Activated T-helper 1 cell treated with anti-CD3 and anti-CD28 coated beads, Interleukin-12 subunit alpha, Interleukin-12 subunit beta, Interleukin-2, Interleukin-4 antibody, amounts not matched to agents 30 ng/mL and 10 ng/mL and 1 ng/mL, durations not matched to agents 14 hours and 24 hours and 36 hours (primary cell): ENCODE measurements at regions of chr9 and their contacts with region 1.

Region 1: DNA sequence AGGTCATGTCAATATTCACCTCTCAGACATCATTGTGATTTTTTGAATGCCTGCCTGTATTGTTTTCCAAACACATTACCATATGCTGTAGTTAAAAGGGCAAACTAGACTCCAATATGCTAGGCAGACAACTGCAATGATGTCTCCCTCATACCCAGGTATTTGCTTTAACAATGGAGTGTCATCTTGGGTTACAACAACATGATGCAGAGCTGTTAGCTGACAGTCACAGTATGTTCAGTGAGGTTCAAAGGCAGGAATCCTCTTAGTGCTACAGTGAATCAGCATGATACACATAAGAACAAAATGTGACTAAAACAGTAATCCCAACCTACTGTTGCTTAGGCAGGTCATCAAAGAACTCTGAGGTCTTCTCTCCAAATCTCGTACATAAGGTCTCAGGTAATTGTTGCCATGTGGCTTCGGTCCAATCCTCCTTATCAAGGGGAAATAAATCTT is 24.0 kb downstream of the OR1J1 start:
- DNase-seq: no peak
- H3K4me3 Mint-ChIP-seq: no peak overlapping the region
- H3K27ac Mint-ChIP-seq: no peak overlapping the region
- H3K4me1 Mint-ChIP-seq: no peaks in the 10 kb centered on the region
- H3K27me3 Mint-ChIP-seq: peaks cover 17% of the 10 kb centered on the region

Region 2: GRCh38 chr9:122099271-122099869 is 354.3 kb before region 1 on chr9:
- intact Hi-C with region 1: loop called (anchors 2 kb)
- DNase-seq: peak; percentile 58
- H3K4me3 Mint-ChIP-seq: no peak overlapping the region
- H3K27ac Mint-ChIP-seq: no peak overlapping the region
- H3K4me1 Mint-ChIP-seq: peaks cover 17% of the 10 kb centered on the region
- H3K27me3 Mint-ChIP-seq: peaks cover 9% of the 10 kb centered on the region

Region 3: DNA sequence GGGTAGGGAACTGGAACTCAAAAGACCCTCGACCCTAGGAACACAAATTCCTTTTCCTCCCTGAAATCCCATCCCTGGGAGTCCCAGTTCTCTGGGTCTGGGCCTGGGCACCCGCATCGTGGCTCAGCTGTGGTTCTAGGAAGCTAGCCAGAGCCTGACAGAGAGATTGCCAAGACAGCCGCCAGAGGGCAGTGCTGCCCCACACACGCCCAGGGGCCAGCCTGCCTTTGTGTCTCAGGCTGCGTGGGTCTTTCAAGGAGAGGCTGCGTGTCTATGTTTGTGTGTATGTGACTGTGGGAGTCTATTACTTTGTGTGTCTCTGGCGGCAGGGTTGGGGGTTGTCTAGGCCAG is 328.6 kb before region 1 on chr9:
- intact Hi-C with region 1: loop called (anchors 1 kb)
- DNase-seq: peak; percentile 60
- H3K4me3 Mint-ChIP-seq: no peak overlapping the region
- H3K27ac Mint-ChIP-seq: no peak overlapping the region
- H3K4me1 Mint-ChIP-seq: peaks cover 5% of the 10 kb centered on the region
- H3K27me3 Mint-ChIP-seq: peaks cover 29% of the 10 kb centered on the region

Region 4: DNA sequence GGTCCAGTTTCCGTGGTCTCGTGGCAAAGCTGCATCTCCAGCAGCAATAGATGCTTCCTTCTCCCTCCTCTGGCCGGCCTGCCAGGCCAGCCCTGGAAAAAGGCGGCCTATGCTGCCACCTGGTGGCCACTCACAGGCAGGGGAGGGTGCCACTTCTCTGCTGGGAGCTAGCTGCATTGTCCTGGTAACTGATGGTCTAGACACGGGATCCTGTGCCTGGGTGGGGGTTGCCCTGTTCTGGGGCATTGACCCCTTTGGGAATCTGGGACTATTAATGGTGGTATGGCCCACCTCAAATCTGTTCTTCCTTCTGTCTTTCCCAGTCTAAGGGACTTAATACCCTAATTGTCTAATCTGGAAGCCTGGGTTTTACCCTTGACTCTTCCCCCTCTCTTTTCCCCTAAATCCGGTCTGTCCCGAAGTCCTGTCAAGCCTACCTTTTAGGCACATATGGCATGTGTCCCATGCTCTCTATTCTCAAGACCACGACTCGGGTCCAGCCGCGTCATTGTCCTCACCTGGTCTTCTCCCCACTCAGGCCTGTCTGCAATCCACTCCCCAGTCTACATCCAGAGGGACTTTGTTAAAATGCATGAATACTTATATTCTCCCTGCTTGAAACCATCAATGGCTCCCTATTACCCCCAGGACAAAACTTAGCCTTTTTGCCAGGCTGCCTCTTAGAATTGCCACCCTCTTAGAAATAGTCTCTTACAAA is 102.9 kb before region 1 on chr9:
- intact Hi-C with region 1: loop called (anchors 1 kb)
- DNase-seq: peak; percentile 63
- H3K4me3 Mint-ChIP-seq: no peak overlapping the region
- H3K27ac Mint-ChIP-seq: no peak overlapping the region
- H3K4me1 Mint-ChIP-seq: peaks cover 15% of the 10 kb centered on the region
- H3K27me3 Mint-ChIP-seq: peaks cover 27% of the 10 kb centered on the region

Region 5: GRCh38 chr9:122379340-122379739 is 74.4 kb before region 1 on chr9:
- intact Hi-C with region 1: loop called (anchors 1 kb)
- DNase-seq: no peak
- H3K4me3 Mint-ChIP-seq: no peak overlapping the region
- H3K27ac Mint-ChIP-seq: no peak overlapping the region
- H3K4me1 Mint-ChIP-seq: peaks cover 10% of the 10 kb centered on the region
- H3K27me3 Mint-ChIP-seq: peaks cover 4% of the 10 kb centered on the region

Region 6: DNA sequence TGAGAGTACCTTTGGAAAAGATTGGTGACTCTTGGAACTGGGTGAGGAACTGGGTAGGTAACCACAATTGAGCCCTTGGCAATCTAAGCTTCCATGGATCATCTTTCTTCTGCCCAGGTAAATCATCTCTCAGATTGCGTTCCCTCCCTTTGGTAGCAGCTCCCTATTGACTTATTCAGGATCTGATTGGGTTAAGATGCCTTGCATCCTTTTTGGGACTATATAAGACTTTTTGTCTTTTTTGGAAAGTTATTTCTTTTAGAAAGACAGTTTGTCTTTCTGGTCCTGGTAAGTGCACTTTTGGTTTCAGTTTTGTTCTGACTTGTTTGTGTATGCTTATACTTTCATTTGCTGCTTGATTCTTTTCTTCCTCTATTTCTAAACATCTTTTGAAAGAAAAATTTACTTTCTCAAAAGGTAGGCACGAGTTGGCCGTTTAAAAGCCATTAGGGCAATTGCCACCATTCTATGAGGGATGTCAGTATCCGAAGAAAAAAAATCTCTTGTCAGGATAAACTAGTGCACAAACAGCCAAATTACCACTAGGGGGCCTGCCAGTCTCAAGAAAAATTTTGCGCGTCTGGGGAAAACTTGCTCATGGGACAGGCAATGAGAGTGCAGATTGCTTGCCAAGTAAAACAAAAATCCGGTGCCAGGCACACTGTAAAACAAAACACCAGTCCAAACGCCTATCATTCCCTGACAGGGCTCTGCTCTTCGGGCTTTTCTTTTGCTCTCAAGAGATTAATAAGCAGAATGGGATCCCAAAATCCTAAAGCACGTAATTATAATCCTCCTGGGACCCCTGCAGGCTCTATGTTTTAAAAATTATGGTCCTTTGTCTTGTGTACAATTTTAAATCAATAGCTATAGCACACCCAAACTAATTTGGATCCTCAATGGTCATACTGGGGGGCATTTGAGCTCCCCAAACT is 11.2 kb after region 1 on chr9:
- intact Hi-C with region 1: loop called (anchors 1 kb)
- DNase-seq: peak; percentile 59
- H3K4me3 Mint-ChIP-seq: peak overlapping the region; percentile 81
- H3K27ac Mint-ChIP-seq: peak overlapping the region; percentile 80
- H3K4me1 Mint-ChIP-seq: peaks cover 17% of the 10 kb centered on the region
- H3K27me3 Mint-ChIP-seq: peaks cover 26% of the 10 kb centered on the region